ENCODE measurements at regions of chr15 and their contacts with region 1.

Region 1: GRCh38 chr15:65916664-65917406 is 47.5 kb downstream of the RAB11A start:
- DNase-seq: no peak
- ATAC-seq: peak; percentile 86

Region 2: DNA sequence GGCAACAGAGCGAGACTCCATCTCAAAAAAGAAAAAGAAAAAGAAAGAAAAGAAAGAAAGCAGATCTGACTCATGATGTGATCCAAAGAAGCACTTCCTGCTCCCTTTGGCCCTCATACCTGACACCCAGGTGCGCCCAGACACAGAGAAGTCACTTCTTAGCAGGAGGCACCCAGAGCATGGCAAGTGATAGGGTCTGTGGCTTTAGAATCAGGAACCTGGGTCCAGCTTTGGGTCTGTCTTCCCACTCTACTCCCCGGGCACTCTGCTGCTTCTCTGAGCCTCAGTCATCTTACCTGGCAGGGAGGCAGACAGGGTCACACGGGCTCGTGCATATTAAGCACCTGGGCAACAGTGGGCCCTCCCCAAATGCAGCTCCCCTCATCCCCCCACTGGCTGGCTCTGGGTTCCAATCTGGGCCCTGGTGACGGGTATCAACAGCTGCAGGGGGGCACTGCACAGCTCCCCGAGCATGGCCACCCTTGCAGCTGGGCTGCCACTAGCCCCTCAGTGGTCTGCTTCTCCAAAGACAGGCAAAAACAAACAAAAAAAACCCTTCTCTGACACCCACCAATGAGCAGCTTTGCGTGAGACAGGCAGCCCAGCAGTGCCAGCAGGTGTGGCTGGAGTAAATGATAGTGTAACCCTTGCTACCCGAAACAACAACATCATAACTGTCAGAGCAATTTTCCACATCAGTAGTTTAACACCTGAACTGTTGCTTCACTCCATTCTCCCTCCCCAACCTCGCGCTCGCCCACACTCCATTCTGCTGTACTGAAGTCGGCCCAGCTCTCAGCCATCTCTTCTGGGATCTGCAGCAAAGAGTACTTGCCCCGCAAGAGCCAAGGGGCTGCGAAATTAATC is 236.9 kb after region 1 on chr15:
- intact Hi-C with region 1: loop called (anchors 5 kb)
- DNase-seq: no peak
- ATAC-seq: no peak

Region 3: GRCh38 chr15:66193066-66193465 is 276.2 kb after region 1 on chr15:
- intact Hi-C with region 1: loop called (anchors 5 kb)
- DNase-seq: no peak
- ATAC-seq: no peak